Activated CD4-positive, alpha-beta T cell treated with anti-CD3 and anti-CD28 coated beads for 36 hours (primary cell): ENCODE measurements at regions of chr4 and their contacts with region 1.

Region 1: DNA sequence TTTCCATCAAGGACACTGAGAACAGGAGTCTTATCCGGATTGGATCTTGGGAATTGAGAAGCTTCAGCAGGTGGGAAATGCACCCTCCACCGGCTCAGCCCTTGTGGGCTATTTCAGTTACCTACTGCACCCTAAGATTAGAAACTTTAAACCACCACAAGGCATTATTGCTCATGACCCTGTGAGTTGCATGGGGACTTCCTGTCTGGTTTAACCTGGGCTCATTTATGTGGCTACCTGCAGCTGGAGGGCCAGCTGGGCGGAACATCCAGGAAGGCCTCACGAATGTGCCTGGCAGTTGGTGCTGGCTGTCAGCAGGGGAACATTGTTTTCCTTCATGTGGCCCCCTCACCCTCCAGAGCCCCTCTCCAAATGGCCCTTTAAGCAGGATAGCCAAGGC is 164.1 kb downstream of the DEFB131A start:
- DNase-seq: no peak
- ATAC-seq: no peak
- H3K4me3 Mint-ChIP-seq: no peak overlapping the region
- H3K27ac Mint-ChIP-seq: no peak overlapping the region
- H3K4me1 Mint-ChIP-seq: peaks cover 39% of the 10 kb centered on the region
- H3K27me3 Mint-ChIP-seq: no peaks in the 10 kb centered on the region

Region 2: DNA sequence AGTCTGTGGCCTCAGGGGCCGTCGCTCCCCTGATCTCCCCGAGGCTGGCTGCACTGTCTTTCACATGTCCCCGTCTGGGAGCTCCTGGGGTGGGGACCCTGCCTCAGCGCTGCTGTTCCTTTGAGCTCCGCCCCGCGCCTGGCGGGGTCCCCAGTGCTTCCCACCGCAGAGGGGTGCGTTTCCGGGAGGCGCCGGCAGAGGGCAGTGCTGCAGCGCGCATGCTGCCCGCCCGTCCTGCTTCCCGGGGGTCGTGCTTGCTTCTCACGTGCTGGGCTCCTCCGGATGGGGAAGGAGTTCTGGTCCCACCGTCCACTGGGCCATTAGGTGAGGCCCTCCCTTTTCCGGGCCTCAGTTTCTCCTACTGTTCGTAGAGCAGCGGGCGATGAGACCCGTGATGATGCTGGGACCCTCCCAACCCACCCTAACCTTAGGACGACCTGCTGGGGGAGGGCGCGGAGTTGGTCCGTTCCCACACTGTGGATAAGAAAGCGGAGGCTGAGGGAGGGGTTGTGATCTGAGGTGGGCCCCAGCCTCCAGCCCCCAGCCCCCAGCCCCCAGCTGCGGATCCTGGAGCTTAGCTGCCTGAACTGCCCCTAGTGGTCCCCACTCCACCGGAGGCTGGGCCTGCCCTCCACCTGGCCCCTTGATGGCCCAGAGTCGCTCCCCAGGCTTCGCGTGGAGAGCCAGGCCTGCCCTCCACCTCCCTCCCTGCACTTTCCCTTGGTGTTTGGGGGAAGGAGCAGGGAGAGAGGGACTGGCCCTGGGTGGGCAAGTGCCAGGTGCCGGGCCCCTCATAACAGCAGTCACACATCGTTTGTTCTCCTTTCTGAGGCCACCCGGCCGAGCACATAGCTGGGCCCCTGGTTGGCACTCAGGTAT is 1000.5 kb before region 1 on chr4:
- CTCF ChIA-PET with region 1: no interaction called
- POLR2A ChIA-PET with region 1: no interaction called
- intact Hi-C with region 1: no loop called
- DNase-seq: peak; percentile 66
- ATAC-seq: no peak
- H3K4me3 Mint-ChIP-seq: no peak overlapping the region
- H3K27ac Mint-ChIP-seq: no peak overlapping the region
- H3K4me1 Mint-ChIP-seq: no peaks in the 10 kb centered on the region
- H3K27me3 Mint-ChIP-seq: peaks cover 4% of the 10 kb centered on the region

Region 3: DNA sequence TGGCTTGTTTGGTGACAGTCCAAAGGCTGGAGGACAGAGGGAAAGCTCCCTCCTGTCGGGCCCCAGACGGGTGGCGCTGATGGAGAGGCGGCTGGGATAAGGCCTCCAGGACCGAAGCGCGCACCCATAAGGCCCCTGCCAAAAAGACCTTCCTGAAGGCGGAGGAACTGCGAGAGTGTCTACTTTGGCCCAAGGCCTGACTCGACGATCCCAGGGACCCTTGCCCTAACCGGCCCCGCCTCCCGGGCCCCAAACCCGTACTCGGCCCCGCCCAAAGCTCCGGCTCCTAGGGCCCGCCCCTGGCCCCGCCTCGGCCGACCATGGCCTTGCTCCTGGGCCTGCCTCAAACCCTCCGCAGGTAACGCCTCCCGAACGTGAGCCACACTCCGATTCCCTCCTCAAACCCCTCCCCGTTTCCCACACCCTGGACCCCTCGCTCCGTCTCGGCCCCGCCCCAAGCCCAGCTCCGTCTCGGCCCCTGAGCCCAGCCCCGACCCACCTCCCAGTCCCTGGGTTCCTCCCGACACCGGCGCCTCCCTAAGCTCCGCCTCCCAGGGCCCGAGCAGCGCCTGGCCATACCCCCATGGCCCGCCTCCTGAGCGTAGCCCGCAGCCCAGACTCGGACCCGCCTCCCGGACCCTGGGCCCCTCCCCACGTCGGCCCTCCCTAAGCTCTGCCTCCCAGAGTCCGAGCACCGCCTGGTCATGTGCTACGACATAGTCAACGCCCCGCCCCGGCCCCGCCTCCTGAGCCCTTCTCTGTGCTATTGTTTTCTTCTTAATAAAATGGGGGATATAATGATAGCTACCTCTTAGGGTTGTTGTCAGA is 83.2 kb after region 1 on chr4:
- CTCF ChIA-PET with region 1: no interaction called
- POLR2A ChIA-PET with region 1: no interaction called
- intact Hi-C with region 1: loop called in 1 of 2 experiments (anchors 1 kb)
- DNase-seq: peak; percentile 95
- ATAC-seq: peak; percentile 100
- H3K4me3 Mint-ChIP-seq: peak overlapping the region; percentile 76
- H3K27ac Mint-ChIP-seq: peak overlapping the region; percentile 76
- H3K4me1 Mint-ChIP-seq: peaks cover 23% of the 10 kb centered on the region
- H3K27me3 Mint-ChIP-seq: no peaks in the 10 kb centered on the region

Region 4: DNA sequence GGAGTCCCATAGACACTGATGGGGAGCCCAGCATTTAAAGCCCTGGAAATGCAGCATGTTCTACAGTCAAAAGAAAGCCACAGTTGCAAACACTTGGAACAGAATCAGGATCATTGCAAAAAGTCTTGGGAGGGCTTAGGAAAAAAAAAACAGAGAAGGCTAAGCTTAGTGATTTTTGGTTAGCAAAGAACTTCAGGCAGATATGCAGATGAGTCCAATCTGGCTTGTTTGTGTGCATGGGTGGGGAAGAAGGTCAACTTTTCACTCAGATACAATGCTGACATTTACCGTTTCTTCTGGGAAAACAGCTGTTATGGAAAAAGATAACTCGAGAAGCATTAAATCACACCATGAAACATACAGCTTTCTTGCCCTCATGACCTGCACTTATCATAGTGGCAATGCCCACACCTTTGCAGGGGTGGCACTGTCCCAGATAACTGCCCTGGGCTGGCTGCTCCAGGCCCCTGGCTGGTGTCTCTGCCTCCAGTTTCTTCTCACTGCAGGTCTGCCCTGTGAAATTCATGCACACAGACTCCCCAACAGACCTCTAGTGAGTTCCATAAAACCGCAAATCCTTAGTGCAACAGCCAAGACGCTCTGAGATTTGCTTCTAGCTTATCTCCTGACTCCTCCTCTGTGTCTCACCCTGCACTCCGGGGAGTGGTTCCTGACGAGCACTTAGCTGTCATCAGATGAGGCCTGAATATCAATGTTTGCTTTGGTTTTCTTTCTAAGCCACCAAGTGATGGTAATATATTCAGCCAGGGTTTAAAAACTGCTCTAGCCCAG is 272.3 kb after region 1 on chr4:
- CTCF ChIA-PET with region 1: no interaction called
- POLR2A ChIA-PET with region 1: no interaction called
- intact Hi-C with region 1: no loop called
- DNase-seq: no peak
- ATAC-seq: no peak
- H3K4me3 Mint-ChIP-seq: no peak overlapping the region
- H3K27ac Mint-ChIP-seq: no peak overlapping the region
- H3K4me1 Mint-ChIP-seq: no peaks in the 10 kb centered on the region
- H3K27me3 Mint-ChIP-seq: peaks cover 2% of the 10 kb centered on the region